Posterior cingulate gyrus (tissue), 11 donors: ENCODE measurements at regions of chr4 and their contacts with region 1.

Region 1: GRCh38 chr4:15144249-15144966 is 142.1 kb downstream of the CPEB2 start:
- DNase-seq: no peak

Region 2: GRCh38 chr4:15100994-15101695 is 43.3 kb before region 1 on chr4:
- intact Hi-C with region 1: loop called (anchors 5 kb)
- DNase-seq: peak in 5 of 10 donors; percentile 8 to 75 (median 36)

Region 3: DNA sequence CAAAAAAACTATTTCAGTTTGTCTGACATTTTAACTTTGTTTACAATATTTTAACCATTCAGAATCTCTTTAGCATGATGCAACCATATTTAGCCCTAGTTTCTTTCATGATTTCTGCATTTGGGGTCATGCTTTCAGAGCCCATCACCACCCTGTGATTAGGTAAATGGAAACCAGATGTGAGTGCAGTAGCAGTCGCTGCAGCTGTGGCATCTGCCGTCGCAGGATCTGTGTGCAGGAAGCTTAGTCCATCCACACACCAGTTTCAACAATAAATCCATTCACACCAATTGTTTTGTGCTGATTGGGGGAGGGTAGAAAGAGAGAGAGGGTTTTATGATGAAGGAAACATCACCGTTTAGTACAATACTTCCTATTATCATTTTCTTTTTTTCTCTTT is 11.7 kb before region 1 on chr4:
- intact Hi-C with region 1: loop called (anchors 2 kb)
- DNase-seq: peak in 5 of 10 donors; percentile 52 to 94 (median 66)